ENCODE measurements at regions of chr15 and their contacts with region 1.

Region 1: GRCh38 chr15:75453703-75454470 is 2.4 kb upstream of the SIN3A start:
- DNase-seq: peak; percentile 97
- H3K4me3 Mint-ChIP-seq: peak overlapping the region; percentile 97
- H3K27ac Mint-ChIP-seq: peak overlapping the region; percentile 100
- H3K4me1 Mint-ChIP-seq: peaks cover 26% of the 10 kb centered on the region
- H3K27me3 Mint-ChIP-seq: no peaks in the 10 kb centered on the region

Region 2: DNA sequence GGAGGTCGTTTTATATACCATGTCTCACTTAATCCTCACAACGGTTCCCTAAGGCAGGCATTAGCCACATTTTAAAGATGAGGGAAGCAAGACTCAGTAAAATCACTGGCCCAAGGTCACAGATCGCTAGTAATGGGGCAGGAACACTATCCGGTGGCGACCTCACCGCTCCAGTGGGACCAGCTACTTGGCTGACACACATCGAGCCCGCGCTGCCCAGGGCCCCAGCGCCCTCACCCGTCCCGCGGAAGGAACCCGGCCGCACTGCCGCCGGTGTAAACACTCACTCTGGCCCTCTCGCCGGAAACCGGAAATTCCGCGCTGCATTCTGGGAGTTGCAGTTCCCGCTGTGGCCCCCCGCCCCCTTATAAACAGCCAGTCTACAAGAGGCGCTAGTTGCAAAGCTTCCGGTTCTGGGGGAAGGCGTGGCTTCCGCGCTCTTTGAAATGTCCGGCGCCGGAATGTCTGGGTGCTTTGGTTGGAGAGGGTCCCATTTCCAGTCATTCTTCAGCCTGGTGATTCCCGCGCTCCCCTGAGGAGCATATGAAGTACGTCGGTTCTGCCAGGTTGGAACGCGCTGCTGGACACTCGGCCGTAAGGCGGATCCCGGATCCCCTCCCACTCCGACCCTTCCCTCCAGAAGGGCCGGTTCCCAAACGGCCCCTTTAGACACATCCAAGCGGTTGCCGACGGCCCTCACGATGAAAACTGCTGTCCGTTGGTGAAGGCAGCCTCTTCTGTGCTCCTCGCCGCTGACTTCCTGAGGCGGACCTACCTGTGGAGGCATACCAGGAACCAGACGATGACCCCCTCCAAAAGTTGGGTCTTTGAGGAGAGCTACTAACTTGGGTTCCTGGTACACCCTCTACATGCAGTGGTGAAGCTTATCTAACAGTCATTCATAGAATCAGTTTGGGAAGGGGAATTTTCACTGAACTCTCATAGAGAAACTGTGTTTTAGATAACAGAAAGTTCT is 992.7 kb before region 1 on chr15 and contains the start of gene UBL7:
- intact Hi-C with region 1: loop called (anchors 10 kb)
- DNase-seq: peak; percentile 95
- H3K4me3 Mint-ChIP-seq: peak within 1 kb of the TSS; percentile 96
- H3K27ac Mint-ChIP-seq: peak within 1 kb of the TSS; percentile 96
- H3K4me1 Mint-ChIP-seq: peaks cover 44% of the 10 kb centered on the region
- H3K27me3 Mint-ChIP-seq: no peaks in the 10 kb centered on the region
- total RNA-seq, gene UBL7: 55.3 and 59.1 TPM in 2 replicates

Region 3: DNA sequence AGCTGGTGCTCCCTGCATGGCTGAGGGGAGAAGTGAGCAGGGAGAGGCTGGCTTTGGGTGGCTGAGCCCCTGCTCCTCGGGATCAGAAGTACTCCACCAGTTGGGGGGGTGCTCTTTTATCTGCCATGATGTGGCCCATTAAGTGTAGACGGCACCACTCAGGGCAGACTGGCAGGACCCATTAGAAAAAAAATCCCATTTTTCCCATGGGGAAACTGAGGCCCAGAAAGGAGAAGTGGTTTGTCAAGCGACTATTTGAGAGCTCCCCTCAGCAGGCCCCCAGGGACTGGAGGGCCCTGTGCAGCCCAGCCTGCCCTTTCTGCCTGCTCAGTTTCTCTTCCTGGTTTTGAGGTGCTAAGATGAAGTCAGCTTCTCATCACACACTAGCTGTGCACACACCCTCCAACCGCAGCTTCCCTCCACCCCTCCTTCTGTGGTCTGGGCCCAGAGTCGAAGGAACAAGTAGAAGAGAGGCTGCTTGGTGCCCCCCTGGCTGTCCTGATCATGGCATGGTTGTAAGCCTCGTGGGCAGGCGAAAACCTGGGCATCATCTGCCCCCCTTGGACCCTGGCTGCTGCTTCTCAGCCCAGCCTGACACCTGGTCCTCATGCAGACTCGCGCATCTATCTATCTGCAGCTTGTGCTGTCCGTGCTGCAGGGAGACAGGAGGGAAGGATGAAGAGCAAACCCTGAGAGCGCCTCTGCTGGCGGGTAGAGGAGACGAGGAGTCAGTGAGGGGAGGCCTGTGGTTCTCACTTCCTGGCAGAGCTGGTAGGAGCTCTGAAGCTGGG is 666.4 kb before region 1 on chr15:
- intact Hi-C with region 1: loop called (anchors 5 kb)
- DNase-seq: peak; percentile 91
- H3K4me3 Mint-ChIP-seq: peak overlapping the region; percentile 92
- H3K27ac Mint-ChIP-seq: peak overlapping the region; percentile 97
- H3K4me1 Mint-ChIP-seq: peaks cover 65% of the 10 kb centered on the region
- H3K27me3 Mint-ChIP-seq: no peaks in the 10 kb centered on the region

Region 4: DNA sequence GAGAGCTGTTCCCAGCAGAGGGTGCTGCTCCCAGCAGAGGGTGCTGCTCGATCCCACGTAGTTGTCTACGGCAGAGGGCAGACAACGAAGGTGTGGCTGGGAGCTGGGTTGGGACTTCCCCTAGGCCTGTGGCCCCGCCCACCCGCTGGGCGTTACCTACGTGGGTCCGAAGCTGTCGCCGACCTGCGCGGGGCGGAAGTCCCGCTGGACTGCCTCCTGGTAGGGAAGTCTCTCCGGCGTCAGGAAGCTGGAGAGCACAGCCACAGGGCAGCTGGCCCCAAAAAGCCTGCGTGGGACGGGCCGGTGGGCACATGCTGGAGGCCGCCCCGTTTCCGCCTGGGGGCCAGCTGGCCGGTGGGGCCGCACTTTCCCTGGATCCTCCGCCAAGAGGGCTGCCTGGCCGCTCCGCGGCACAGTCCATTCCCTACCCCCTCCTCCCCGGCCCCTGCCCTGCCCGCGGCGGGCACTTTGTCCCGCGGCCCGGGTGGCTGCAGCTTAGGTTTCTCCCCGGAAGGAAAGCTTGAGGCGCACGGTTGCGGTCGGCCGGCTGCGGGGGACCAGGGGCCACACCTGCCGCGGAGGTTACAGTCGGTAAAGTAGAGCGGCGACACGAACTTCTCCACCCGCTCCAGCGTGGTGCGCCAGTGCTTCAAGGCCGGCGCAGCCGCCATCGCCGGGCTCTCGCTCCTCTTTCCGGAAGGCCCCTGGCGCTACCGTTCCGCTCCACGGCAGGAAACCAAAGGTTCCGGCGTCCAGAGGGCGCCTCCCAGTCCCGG is 85.8 kb before region 1 on chr15 and contains the start of gene MAN2C1:
- intact Hi-C with region 1: loop called (anchors 1 kb)
- DNase-seq: peak; percentile 92
- H3K4me3 Mint-ChIP-seq: peak within 1 kb of the TSS; percentile 89
- H3K27ac Mint-ChIP-seq: peak within 1 kb of the TSS; percentile 93
- H3K4me1 Mint-ChIP-seq: peaks cover 16% of the 10 kb centered on the region
- H3K27me3 Mint-ChIP-seq: no peaks in the 10 kb centered on the region
- total RNA-seq, gene MAN2C1: 233 and 240 TPM in 2 replicates

Region 5: DNA sequence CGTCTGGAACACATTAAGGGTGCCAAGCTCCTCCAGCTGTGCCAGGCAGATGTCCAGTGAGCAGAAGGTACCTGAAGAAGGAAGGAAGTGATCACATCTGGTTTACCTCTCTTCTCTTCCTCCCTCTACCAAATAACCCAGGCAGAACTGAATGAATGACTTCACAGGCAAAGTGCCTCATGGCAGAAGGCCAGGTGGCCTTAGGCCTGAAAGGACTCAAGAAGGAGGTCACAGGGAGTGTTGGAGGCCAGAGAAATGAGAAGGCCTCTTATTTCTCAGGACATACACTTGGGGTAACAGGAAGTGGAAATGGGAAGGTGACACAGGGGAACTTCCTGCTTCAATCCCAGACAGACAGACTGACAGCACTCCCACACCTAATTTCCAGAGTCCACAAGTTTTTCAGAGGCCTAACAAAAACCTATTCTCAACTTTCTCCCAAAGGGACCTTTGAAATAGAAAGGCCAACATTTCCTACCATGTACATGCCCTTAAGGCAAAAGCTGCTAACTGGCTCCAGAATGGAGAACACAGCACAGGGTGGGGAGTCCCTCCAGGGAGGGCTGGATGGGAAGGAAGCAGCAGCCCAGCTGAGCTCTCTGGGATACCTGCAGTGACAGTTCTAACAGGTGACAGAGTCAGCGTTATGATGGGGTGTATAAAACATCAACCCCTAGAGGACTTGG is 15.2 kb after region 1 on chr15:
- intact Hi-C with region 1: no loop called
- DNase-seq: no peak
- H3K4me3 Mint-ChIP-seq: no peak overlapping the region
- H3K27ac Mint-ChIP-seq: no peak overlapping the region
- H3K4me1 Mint-ChIP-seq: no peaks in the 10 kb centered on the region
- H3K27me3 Mint-ChIP-seq: no peaks in the 10 kb centered on the region

Region 6: DNA sequence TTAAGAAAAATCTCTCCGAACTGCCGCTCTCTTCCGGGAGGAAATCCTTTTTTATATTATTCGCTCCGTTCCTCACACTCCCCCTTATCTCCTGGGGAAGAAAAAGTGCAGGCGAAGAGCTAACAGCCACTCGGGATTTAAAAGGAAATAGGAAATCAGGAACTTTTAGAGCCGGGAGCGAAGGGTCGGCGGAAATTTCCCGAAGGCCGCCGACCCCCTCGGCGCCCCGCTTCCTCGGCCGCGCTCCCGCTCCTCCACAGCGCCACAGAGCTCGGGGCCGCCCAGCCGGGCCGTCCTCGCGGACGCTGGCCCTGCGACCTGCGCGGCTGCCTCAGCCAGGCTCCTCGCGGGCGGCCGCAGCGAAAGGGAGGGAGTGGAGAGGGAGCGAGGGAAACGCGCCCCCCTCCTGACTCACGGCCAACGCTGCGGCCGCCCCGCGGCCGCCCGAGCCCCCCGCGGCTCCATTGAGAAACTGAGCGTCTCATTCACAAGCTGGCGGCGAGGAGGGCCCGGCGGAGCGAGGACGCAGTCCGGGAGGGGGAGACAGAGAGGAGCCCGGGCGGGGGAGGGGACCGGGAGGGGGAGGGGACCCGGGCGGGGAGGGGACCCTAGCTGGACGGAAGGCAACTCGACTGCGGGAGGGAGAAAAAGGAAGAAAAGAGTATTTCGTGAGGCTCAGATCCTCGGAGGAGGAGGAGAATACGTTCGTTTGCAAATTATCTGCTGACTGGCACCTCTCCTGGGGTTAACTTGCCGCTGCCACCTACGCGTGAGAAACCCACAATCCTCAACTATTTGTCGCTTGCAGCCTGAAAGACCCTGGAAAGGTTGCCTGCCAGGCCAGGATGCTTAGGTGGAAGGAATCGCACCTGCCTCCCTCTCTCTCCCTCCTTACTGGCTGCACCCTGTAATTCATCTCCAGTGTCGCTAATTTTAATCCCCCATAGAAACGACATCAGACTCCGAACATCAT is 125.3 kb after region 1 on chr15 and contains the start of gene PTPN9:
- intact Hi-C with region 1: loop called (anchors 5 kb)
- DNase-seq: peak; percentile 63
- H3K4me3 Mint-ChIP-seq: peak within 1 kb of the TSS; percentile 91
- H3K27ac Mint-ChIP-seq: peak within 1 kb of the TSS; percentile 85
- H3K4me1 Mint-ChIP-seq: peaks cover 8% of the 10 kb centered on the region
- H3K27me3 Mint-ChIP-seq: no peaks in the 10 kb centered on the region
- total RNA-seq, gene PTPN9: 30.4 and 32.3 TPM in 2 replicates

Region 7: DNA sequence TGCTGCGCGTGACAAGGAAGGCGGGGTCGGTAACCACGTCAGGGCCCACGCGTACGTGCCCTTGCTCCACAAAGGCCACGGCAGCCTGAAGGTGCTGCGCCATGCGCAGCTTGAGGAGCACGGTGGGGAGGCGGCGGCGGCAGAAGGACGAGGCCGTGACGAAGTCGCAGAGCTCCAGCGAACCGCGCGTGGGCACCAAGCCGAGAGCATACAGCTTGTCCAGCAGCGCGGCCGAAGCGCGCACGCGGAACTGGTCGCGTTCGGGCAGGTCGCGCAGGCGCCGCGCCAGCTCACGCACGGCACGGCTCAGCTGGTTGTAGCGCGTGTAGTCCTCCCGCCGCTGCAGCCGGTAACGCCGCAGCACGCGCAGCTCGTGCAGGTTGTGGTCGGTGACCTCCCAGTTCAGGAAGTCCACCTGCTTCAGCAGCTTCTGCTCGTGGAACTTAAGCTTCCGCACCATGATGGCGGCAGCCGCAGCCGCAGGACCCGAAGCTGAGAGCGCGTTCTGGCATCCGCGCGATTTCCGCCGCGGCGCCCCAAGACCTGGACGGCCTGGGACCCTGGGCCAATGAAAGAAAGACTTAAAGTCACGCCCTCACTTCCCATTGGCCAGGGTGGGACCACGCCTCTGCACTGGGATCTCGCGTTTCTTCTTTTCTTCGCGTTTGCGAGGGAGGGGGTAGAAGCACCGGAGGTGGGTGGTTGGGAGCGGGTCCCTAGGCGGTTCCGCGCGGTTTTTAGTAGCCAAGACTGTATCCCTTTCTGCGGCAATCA is 186.0 kb after region 1 on chr15 and contains the start of gene IMP3:
- intact Hi-C with region 1: loop called (anchors 1 kb)
- DNase-seq: peak; percentile 95
- H3K4me3 Mint-ChIP-seq: peak within 1 kb of the TSS; percentile 92
- H3K27ac Mint-ChIP-seq: peak within 1 kb of the TSS; percentile 93
- H3K4me1 Mint-ChIP-seq: peaks cover 31% of the 10 kb centered on the region
- H3K27me3 Mint-ChIP-seq: peaks cover 2% of the 10 kb centered on the region
- total RNA-seq, gene IMP3: 103 and 106 TPM in 2 replicates

Region 8: DNA sequence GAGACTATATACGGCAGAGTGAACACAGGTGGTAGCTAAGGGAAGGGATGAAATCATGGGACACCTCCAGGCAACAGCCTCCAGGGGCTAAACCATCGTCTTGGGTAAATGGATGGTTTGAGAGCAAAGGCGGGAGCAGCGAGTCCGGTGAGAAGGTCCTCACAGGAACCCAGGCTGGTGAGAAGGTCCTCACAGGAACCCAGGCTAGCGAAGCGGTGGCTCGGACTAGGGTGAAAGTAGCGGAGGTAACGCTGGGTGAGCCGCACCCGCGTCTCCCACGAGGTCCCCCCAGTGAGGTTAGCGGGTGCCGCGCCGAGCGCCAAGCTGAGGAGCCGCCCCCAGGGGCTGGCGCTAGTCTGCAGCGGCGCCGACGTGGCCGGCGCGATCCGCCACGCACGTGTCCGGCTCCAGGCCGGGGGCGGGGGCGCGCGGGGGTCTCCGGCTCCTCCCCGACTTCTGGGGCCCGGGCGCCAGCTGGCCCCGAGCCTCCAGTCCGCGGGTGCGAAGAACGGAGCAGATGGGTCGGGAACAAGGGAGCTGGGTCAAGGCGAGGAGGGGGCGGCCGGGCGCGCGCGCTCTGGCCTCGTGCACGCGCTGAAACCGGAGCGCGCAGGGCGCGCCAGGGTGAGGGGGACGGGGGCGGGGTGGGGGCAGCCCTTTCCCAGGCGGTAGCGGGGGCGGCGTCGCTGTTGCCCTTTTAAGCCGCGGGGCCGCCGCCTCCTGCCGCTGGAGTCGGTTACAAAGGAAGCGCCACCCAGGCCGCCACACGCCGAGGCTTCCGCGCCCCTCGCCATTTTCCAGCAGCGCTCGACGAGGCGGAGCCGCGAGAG is 389.1 kb after region 1 on chr15 and contains the start of gene UBE2Q2:
- intact Hi-C with region 1: loop called (anchors 10 kb)
- DNase-seq: peak; percentile 70
- H3K4me3 Mint-ChIP-seq: peak within 1 kb of the TSS; percentile 94
- H3K27ac Mint-ChIP-seq: peak within 1 kb of the TSS; percentile 88
- H3K4me1 Mint-ChIP-seq: peaks cover 30% of the 10 kb centered on the region
- H3K27me3 Mint-ChIP-seq: peaks cover 10% of the 10 kb centered on the region
- total RNA-seq, gene UBE2Q2: 18.9 and 21.1 TPM in 2 replicates